ENCODE measurements at regions of chr7 and their contacts with region 1.

Region 1: GRCh38 chr7:923108-924041 is 31.1 kb downstream of the ADAP1 start:
- DNase-seq: peak; percentile 89
- H3K4me3 Mint-ChIP-seq: peak overlapping the region; percentile 81
- H3K27ac Mint-ChIP-seq: peak overlapping the region; percentile 94
- H3K4me1 Mint-ChIP-seq: peaks cover 20% of the 10 kb centered on the region
- H3K27me3 Mint-ChIP-seq: peaks cover 4% of the 10 kb centered on the region

Region 2: DNA sequence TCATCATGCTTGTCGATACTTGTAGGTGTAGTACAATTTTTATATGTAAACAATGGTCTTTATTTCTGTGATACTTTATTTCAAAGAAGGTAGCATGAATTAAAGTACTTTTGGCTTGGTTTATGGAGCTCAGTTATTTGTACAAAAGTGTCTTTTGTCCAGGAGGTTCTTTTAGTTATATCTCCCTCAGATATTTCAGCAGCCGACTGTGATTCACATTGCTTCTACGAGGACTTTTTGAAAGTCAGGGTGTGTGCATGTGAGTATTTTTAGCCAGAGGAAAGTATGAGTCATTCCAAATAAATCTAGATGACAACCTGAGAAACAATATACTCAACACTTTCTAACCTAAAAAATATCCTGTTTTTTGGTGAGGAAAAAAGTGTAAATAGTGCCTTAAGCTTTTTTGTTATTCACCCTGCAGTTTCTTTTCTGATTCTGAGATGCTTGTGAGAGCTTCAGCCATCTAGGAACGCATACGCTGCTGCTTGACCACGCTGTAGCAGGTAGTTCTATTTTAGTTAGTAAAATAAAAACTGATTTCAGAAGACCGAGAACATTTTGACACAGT is 91.7 kb before region 1 on chr7:
- intact Hi-C with region 1: loop called (anchors 1 kb)
- DNase-seq: no peak
- H3K4me3 Mint-ChIP-seq: peak overlapping the region; percentile 80
- H3K27ac Mint-ChIP-seq: peak overlapping the region; percentile 93
- H3K4me1 Mint-ChIP-seq: peaks cover 30% of the 10 kb centered on the region
- H3K27me3 Mint-ChIP-seq: no peaks in the 10 kb centered on the region

Region 3: DNA sequence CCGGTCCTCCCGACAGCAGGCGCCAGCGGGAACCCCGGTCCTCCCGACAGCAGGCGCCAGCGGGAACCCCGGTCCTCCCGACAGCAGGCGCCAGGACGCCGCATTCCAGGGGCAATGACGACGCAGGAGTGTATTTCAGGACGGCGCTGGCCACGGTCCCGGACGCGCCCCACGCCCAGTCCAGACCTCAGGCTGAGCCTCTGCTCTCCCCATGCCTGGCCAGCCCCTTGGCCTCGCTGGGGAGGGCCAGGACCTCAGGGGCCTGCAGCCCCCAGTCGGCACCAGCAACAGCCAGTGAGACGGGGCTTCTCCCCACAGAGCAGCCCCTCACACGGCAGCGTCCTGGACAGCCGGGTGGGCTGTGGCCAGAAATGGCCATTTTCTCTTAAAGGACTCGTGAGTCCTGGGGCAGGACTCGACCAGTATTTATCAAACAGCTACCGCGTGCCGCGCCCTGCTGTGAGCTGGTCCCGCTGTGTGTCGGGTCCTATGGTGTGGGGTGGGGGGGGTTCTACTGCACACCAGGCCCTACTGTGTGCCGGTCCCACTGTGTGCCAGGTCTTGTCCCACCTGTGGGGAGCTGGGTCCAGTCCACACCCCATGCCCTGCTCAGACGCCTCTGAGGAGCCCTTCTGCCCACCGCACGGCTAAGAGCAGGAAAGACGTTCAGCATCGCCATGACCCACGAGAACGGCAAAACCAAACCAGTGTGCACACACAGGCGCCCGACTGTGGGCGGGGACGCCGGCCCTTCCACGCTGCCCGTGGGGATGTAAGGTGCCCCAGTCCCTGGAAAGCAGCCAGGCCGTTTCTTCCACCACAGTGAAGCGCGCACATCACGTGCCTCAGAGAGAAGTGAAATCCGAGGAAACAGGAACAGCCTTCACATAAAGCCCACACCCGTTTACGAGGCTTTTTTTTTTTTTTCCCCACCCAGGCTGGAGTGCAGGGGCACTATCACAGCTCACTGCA is 13.7 kb before region 1 on chr7:
- intact Hi-C with region 1: loop called (anchors 1 kb)
- DNase-seq: no peak
- H3K4me3 Mint-ChIP-seq: no peak overlapping the region
- H3K27ac Mint-ChIP-seq: no peak overlapping the region
- H3K4me1 Mint-ChIP-seq: no peaks in the 10 kb centered on the region
- H3K27me3 Mint-ChIP-seq: peaks cover 5% of the 10 kb centered on the region

Region 4: GRCh38 chr7:939843-940242 is 16.5 kb after region 1 on chr7:
- intact Hi-C with region 1: loop called (anchors 1 kb)
- DNase-seq: no peak
- H3K4me3 Mint-ChIP-seq: no peak overlapping the region
- H3K27ac Mint-ChIP-seq: no peak overlapping the region
- H3K4me1 Mint-ChIP-seq: peaks cover 35% of the 10 kb centered on the region
- H3K27me3 Mint-ChIP-seq: no peaks in the 10 kb centered on the region

Region 5: GRCh38 chr7:954330-955238 is 31.2 kb after region 1 on chr7 and contains the start of gene ADAP1:
- intact Hi-C with region 1: loop called (anchors 1 kb)
- DNase-seq: peak; percentile 41
- H3K4me3 Mint-ChIP-seq: peak within 1 kb of the TSS; percentile 84
- H3K27ac Mint-ChIP-seq: peak within 1 kb of the TSS; percentile 7
- H3K4me1 Mint-ChIP-seq: no peaks in the 10 kb centered on the region
- H3K27me3 Mint-ChIP-seq: peaks cover 7% of the 10 kb centered on the region
- total RNA-seq, gene ADAP1: 80.9 and 87.7 TPM in 2 replicates

Region 6: DNA sequence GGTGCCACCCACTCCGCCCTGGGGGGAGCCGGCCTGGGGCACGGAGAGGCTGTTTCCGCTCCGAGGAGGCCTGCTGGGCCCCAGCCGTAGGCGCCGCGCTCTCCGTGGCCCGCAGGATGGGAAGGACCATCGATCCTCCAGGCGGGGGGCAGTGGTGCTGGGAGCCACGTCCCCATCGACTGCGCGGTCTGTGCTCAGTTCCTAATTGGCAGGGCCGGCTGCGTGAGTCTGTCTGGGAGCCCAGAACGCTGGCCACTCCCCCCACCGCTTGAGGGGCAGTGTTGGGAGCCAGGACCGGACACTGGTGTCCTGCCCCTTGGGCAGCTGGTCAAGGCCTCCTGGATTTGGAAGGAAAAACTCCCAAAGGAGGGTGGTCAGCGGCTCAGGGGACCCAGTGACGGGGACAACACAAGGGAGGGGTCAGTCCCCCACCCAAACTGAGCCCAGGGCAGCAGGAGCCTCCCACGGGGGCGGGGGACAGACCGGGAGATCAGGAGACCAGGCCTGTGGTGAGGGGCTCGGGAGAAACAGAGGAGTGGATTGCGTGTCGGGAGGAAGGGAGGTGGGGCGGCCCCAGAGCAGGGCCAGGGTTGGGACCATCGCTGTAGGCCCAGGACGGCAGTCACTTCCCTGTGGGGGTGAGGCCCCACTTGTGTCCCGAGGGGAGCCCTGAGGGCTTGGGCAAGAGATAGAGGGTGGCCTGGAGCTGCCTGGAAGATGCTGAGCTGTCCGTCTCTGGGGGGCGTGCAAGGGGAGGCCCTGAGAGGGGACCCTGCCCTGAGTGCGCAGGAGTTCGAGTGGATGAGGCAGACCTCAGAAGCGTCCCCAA is 398.2 kb after region 1 on chr7:
- intact Hi-C with region 1: no loop called
- DNase-seq: no peak
- H3K4me3 Mint-ChIP-seq: no peak overlapping the region
- H3K27ac Mint-ChIP-seq: no peak overlapping the region
- H3K4me1 Mint-ChIP-seq: no peaks in the 10 kb centered on the region
- H3K27me3 Mint-ChIP-seq: peaks cover 3% of the 10 kb centered on the region

Measured in activated T-helper 1 cell treated with anti-CD3 and anti-CD28 coated beads, Interleukin-12 subunit alpha, Interleukin-12 subunit beta, Interleukin-2, Interleukin-4 antibody, amounts not matched to agents 30 ng/mL and 10 ng/mL and 1 ng/mL, durations not matched to agents 14 hours and 24 hours and 36 hours (primary cell).